CD8-positive, alpha-beta T cell (primary cell): ENCODE measurements at regions of chr5 and their contacts with region 1.

Region 1: GRCh38 chr5:111242606-111243005 is 18.4 kb downstream of the CAMK4 start:
- DNase-seq: no peak
- ATAC-seq: no peak
- H3K4me3 ChIP-seq: no peak overlapping the region
- H3K4me3 Mint-ChIP-seq: peak overlapping the region; percentile 1
- H3K27ac ChIP-seq: no peak overlapping the region
- H3K27ac Mint-ChIP-seq: peak overlapping the region; percentile 80
- H3K4me1 ChIP-seq: peaks cover 81% of the 10 kb centered on the region
- H3K4me1 Mint-ChIP-seq: peaks cover 89% of the 10 kb centered on the region
- H3K27me3 ChIP-seq: no peaks in the 10 kb centered on the region
- H3K27me3 Mint-ChIP-seq: no peaks in the 10 kb centered on the region
- CTCF ChIP-seq: no peak

Region 2: GRCh38 chr5:111197523-111197922 is 45.1 kb before region 1 on chr5:
- CTCF ChIA-PET with region 1: no interaction called
- POLR2A ChIA-PET with region 1: no interaction called
- intact Hi-C with region 1: loop called in 1 of 2 experiments (anchors 1 kb)
- DNase-seq: no peak
- ATAC-seq: no peak
- H3K4me3 ChIP-seq: no peak overlapping the region
- H3K4me3 Mint-ChIP-seq: no peak overlapping the region
- H3K27ac ChIP-seq: no peak overlapping the region
- H3K27ac Mint-ChIP-seq: no peak overlapping the region
- H3K4me1 ChIP-seq: no peaks in the 10 kb centered on the region
- H3K4me1 Mint-ChIP-seq: peaks cover 4% of the 10 kb centered on the region
- H3K27me3 ChIP-seq: no peaks in the 10 kb centered on the region
- H3K27me3 Mint-ChIP-seq: peaks cover 3% of the 10 kb centered on the region
- CTCF ChIP-seq: no peak

Region 3: DNA sequence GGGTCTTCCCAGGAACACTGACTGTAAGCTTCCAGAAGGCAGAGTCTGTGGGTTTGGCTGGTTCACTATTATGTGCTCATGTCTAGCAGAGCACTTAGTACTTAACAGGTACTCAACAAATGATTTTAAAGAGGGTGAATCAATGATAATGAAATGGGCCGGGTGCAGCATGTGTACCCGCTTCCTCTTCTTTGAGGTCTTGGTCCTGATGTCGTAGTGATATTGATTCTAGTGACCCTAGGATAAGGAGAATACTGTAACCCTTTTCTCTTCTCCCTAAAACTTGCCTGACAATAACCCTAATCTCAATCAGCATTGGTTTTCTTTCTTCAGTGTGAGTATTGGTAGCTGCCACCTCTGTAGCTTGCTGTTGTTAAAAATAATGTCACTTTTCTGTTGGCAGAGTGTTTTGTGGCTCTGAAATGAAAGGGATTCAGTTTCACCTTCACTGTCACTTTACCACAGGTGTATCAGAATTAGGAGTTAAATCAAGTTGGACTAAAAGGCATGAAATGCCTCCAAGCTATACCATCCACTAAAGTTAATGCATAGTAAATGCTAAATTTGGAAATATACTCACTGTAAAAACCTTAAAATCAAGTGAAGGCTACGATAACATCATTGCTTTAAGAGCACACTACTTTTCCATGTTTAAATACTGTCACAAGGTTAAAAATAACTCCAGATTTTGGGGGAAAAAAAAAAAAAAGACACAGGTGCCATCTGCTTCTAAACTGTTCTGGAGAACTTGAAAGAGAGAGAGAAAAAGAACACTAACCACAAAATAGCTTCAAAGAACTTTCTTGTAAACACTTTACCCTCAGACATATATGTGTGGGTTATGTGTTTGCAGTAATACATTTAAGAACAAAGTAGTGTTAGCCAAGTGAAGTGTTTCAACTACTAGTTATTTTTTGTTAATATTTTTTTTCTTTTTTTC is 12.5 kb before region 1 on chr5:
- CTCF ChIA-PET with region 1: interaction called, 14 read pairs
- POLR2A ChIA-PET with region 1: interaction called, 35 read pairs
- intact Hi-C with region 1: loop called (anchors 1 to 2 kb)
- DNase-seq: peak in 2 of 9 experiments; percentile 67 to 83
- ATAC-seq: peak; percentile 36
- H3K4me3 ChIP-seq: peak overlapping the region; percentile 4 to 46
- H3K4me3 Mint-ChIP-seq: peak overlapping the region; percentile 79
- H3K27ac ChIP-seq: peak overlapping the region; percentile 31 to 72
- H3K27ac Mint-ChIP-seq: peak overlapping the region; percentile 99
- H3K4me1 ChIP-seq: peaks cover 75% of the 10 kb centered on the region
- H3K4me1 Mint-ChIP-seq: peaks cover 74% of the 10 kb centered on the region
- H3K27me3 ChIP-seq: no peaks in the 10 kb centered on the region
- H3K27me3 Mint-ChIP-seq: no peaks in the 10 kb centered on the region
- CTCF ChIP-seq: no peak

Region 4: GRCh38 chr5:111254613-111255012 is 12.0 kb after region 1 on chr5:
- CTCF ChIA-PET with region 1: no interaction called
- POLR2A ChIA-PET with region 1: interaction called, 3 read pairs
- intact Hi-C with region 1: loop called (anchors 1 kb)
- DNase-seq: peak in 6 of 9 experiments; percentile 19 to 93 (median 69)
- ATAC-seq: peak; percentile 86
- H3K4me3 ChIP-seq: no peak overlapping the region
- H3K4me3 Mint-ChIP-seq: peak overlapping the region; percentile 60
- H3K27ac ChIP-seq: peak overlapping the region; percentile 14 to 62
- H3K27ac Mint-ChIP-seq: peak overlapping the region; percentile 90
- H3K4me1 ChIP-seq: peaks cover 68% of the 10 kb centered on the region
- H3K4me1 Mint-ChIP-seq: peaks cover 79% of the 10 kb centered on the region
- H3K27me3 ChIP-seq: no peaks in the 10 kb centered on the region
- H3K27me3 Mint-ChIP-seq: no peaks in the 10 kb centered on the region
- CTCF ChIP-seq: no peak

Region 5: DNA sequence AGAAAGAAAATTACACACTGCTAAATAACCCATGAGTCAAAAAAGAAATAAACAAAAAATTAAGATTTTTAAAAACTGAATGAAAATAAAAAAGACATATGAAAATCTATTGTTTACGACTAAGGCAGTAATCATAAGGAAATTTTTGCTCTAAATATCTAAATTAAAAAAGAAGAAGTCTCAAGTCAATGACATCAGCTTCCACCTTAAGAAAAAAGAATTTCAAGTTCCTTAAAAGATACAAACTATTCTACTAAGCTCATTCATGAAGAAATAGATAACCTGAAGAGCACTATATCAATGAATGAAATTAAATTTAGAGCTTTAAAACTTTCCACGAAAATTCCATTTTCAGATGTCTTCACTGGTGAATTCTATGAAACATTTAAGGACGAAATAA is 285.4 kb after region 1 on chr5:
- CTCF ChIA-PET with region 1: no interaction called
- POLR2A ChIA-PET with region 1: no interaction called
- intact Hi-C with region 1: no loop called
- DNase-seq: no peak
- ATAC-seq: no peak
- H3K4me3 ChIP-seq: no peak overlapping the region
- H3K4me3 Mint-ChIP-seq: no peak overlapping the region
- H3K27ac ChIP-seq: no peak overlapping the region
- H3K27ac Mint-ChIP-seq: no peak overlapping the region
- H3K4me1 ChIP-seq: peaks cover 7% of the 10 kb centered on the region
- H3K4me1 Mint-ChIP-seq: peaks cover 12% of the 10 kb centered on the region
- H3K27me3 ChIP-seq: no peaks in the 10 kb centered on the region
- H3K27me3 Mint-ChIP-seq: no peaks in the 10 kb centered on the region
- CTCF ChIP-seq: no peak